ENCODE measurements at regions of chr12 and their contacts with region 1.

Region 1: GRCh38 chr12:52884526-52885293 is 20.2 kb downstream of the KRT8 start:
- DNase-seq: peak; percentile 74 to 82
- ATAC-seq: peak; percentile 62 to 65; a peak in 5 of 6 replicates
- H3K4me3 ChIP-seq: no peak overlapping the region
- H3K27ac ChIP-seq: peak overlapping the region; percentile 55 to 83
- H3K4me1 ChIP-seq: peaks cover 33% of the 10 kb centered on the region
- CTCF ChIP-seq: peak; percentile 98
- EP300 ChIP-seq: no peak
- POLR2A ChIP-seq: no peak
- RAD21 ChIP-seq: peak; percentile 100

Region 2: GRCh38 chr12:52745569-52745968 is 139.1 kb before region 1 on chr12:
- CTCF ChIA-PET with region 1: no interaction called
- POLR2A ChIA-PET with region 1: no interaction called
- DNase-seq: no peak
- ATAC-seq: no peak
- H3K4me3 ChIP-seq: no peak overlapping the region
- H3K27ac ChIP-seq: no peak overlapping the region
- H3K4me1 ChIP-seq: no peaks in the 10 kb centered on the region
- CTCF ChIP-seq: no peak
- EP300 ChIP-seq: no peak
- POLR2A ChIP-seq: no peak
- RAD21 ChIP-seq: no peak

Region 3: GRCh38 chr12:52870351-52871290 is 14.1 kb before region 1 on chr12:
- CTCF ChIA-PET with region 1: interaction called, 102 read pairs
- POLR2A ChIA-PET with region 1: interaction called, 4 read pairs
- DNase-seq: peak; percentile 83 to 86
- ATAC-seq: peak; percentile 33 to 71
- H3K4me3 ChIP-seq: no peak overlapping the region
- H3K27ac ChIP-seq: peak overlapping the region; percentile 94 to 97
- H3K4me1 ChIP-seq: peaks cover 80% of the 10 kb centered on the region
- CTCF ChIP-seq: peak; percentile 96
- EP300 ChIP-seq: no peak
- POLR2A ChIP-seq: no peak
- RAD21 ChIP-seq: peak; percentile 98 to 100

Region 4: DNA sequence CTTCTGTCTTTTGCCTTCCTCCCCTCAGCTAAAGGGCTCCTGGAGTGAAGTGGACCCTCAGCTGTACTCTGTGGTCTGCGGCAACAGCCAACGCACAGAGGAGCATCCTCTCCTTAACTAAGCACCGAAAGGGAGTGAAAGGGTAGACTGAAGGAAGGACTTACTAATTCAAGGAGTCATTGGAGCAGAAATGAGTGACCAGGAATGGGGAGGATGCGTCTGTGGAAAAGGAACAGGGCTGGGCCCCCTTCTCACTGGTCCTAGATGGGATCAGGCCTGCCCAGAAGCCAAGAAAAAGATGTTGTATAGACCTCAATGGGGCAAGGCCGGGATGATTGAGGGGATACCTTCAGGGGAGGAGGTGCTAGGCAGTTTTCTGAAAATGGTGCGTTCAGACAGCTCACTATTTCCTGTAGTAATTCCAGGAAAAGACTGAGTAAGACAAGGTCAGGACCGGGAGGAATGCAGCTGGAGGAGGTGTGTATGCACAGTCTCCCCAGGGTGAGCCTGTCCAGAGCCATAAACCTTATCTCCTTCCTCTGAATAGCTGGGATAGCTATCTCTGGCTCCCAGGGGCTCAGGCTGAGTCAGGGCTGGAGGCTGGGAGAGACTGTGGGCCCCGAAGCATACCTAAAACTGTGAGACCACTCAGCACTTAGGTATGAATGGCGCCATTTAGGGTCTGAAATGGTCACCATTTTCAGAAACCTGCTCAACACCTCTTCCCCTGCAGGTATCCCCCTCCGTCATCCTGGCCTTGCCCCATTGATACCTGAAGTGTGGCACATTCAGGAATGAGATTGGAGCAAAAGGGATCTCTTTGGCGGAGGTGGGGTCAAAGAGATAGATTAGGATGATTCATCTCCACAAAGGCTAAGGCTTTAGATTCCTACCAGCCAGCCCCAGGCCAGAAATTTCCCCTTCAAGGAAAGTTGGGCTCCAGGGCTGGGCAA is 40.3 kb after region 1 on chr12:
- CTCF ChIA-PET with region 1: interaction called, 55 read pairs
- POLR2A ChIA-PET with region 1: interaction called, 5 read pairs
- DNase-seq: peak; percentile 85 to 94
- ATAC-seq: peak; percentile 57 to 80
- H3K4me3 ChIP-seq: peak overlapping the region; percentile 27; the same call in 2 of the 3 replicates
- H3K27ac ChIP-seq: peak overlapping the region; percentile 96 to 97
- H3K4me1 ChIP-seq: peaks cover 85% of the 10 kb centered on the region
- CTCF ChIP-seq: no peak
- EP300 ChIP-seq: peak; percentile 62 to 90; a peak in 4 of 5 replicates
- POLR2A ChIP-seq: no peak
- RAD21 ChIP-seq: peak in 1 of 2 experiments; percentile 32; a peak in 2 of 5 replicates

Region 5: DNA sequence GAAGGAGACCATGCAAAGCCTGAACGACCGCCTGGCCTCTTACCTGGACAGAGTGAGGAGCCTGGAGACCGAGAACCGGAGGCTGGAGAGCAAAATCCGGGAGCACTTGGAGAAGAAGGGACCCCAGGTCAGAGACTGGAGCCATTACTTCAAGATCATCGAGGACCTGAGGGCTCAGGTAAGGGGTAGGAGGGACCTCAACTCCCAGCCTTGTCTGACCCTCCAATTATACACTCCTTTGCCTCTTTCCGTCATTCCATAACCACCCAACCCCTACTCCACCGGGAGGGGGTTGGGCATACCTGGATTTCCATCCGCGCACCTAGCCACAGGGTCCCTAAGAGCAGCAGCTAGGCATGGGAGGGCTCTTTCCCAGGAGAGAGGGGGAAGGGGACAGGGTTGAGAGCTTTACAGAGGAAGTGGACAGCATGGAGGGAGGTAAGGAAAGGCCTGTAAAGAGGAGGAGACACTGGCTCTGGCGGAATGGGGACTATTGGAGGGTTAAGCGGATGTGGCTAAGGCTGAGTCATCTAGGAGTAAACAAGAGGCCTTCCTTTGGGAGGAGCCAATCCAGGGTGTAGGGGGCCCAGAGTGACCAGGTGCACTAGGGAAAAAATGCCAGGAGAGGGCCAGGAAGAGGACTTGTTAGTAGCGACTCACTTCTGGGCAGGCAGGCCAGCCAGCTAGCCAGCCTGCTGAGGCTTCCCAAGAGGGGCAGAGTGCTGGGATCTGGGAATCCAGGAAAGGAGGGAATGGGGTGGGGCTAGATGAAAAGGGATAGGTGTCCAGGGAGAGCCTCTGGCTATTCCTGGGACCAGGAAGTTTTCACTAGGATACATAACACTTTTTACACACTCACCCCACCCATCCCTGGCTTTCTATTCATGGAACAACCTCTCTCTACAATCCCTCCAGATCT is 65.0 kb after region 1 on chr12:
- CTCF ChIA-PET with region 1: interaction called, 1,736 read pairs
- POLR2A ChIA-PET with region 1: interaction called, 3 read pairs
- DNase-seq: peak; percentile 87 to 95
- ATAC-seq: peak; percentile 75 to 82
- H3K4me3 ChIP-seq: peak overlapping the region; percentile 91
- H3K27ac ChIP-seq: peak overlapping the region; percentile 96 to 97
- H3K4me1 ChIP-seq: peaks cover 66% of the 10 kb centered on the region
- CTCF ChIP-seq: no peak
- EP300 ChIP-seq: 0 out of 5 replicates have a peak, but pooled peaks of 1 of the 2 experiments have one; percentile 16
- POLR2A ChIP-seq: peak; percentile 49
- RAD21 ChIP-seq: no peak

Region 6: GRCh38 chr12:53011887-53012286 is 127.2 kb after region 1 on chr12:
- CTCF ChIA-PET with region 1: interaction called, 18 read pairs
- POLR2A ChIA-PET with region 1: no interaction called
- DNase-seq: no peak
- ATAC-seq: no peak
- H3K4me3 ChIP-seq: no peak overlapping the region
- H3K27ac ChIP-seq: no peak overlapping the region
- H3K4me1 ChIP-seq: peaks cover 40% of the 10 kb centered on the region; the same call in 2 of the 3 replicates
- CTCF ChIP-seq: no peak
- EP300 ChIP-seq: no peak
- POLR2A ChIP-seq: no peak
- RAD21 ChIP-seq: no peak

Region 7: DNA sequence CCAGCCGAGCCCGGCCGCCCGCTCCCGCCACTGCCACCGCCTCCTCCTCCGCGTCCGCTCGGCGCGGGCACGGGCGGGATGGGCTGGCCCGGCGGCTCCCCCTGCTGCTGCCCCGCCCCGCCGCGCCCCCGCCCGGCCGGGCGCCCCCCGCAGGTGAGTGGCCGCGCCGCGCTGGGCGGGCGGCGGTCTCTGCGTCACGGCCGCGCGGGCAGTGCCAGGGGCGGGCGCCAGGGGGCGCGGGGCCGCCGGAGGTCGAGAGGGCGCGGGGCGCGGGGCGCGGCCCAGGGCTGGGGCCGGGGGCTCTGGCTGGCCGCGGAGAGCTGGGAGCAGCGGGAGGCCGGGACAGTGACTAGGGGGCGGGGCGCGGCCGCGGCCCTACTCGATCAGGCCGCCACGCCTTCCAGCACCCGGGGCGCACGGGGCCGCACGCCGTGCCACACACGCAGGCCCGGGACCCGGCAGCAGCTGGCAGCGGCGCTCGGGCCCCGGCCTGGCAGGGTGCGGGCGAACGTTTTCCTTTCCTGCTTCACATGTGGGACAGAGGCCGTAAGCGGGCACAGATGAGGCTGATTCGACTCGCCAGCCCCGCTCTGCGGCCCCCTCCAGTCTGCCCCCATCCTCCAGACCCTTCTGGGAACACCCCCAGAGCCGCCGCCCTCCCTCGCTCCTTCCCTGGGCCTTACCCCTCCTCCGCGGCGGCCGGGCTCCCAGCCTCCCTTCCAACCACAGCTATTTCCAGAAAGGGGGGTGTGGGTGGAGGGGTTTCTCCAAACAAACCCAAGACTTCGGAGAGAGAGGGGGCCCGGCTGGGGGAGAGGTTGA is 162.7 kb after region 1 on chr12:
- CTCF ChIA-PET with region 1: interaction called, 14 read pairs
- POLR2A ChIA-PET with region 1: no interaction called
- DNase-seq: peak; percentile 67 to 83
- ATAC-seq: peak; percentile 36 to 37
- H3K4me3 ChIP-seq: peak overlapping the region; percentile 54
- H3K27ac ChIP-seq: peak overlapping the region; percentile 99
- H3K4me1 ChIP-seq: peaks cover 74% of the 10 kb centered on the region
- CTCF ChIP-seq: peak; percentile 71
- EP300 ChIP-seq: no peak
- POLR2A ChIP-seq: peak; percentile 38
- RAD21 ChIP-seq: no peak